OCI-LY7 (cell line): ENCODE measurements at regions of chr16 and their contacts with region 1.

Region 1: GRCh38 chr16:58629572-58630104 is at the start of gene CNOT1:
- DNase-seq: peak; percentile 99
- H3K4me3 ChIP-seq: peak within 1 kb of the TSS; percentile 97
- H3K27ac ChIP-seq: peak within 1 kb of the TSS; percentile 87
- H3K4me1 ChIP-seq: peaks cover 25% of the 10 kb centered on the region
- CTCF ChIP-seq: no peak
- total RNA-seq, gene CNOT1: 209 and 230 TPM in 2 replicates

Region 2: DNA sequence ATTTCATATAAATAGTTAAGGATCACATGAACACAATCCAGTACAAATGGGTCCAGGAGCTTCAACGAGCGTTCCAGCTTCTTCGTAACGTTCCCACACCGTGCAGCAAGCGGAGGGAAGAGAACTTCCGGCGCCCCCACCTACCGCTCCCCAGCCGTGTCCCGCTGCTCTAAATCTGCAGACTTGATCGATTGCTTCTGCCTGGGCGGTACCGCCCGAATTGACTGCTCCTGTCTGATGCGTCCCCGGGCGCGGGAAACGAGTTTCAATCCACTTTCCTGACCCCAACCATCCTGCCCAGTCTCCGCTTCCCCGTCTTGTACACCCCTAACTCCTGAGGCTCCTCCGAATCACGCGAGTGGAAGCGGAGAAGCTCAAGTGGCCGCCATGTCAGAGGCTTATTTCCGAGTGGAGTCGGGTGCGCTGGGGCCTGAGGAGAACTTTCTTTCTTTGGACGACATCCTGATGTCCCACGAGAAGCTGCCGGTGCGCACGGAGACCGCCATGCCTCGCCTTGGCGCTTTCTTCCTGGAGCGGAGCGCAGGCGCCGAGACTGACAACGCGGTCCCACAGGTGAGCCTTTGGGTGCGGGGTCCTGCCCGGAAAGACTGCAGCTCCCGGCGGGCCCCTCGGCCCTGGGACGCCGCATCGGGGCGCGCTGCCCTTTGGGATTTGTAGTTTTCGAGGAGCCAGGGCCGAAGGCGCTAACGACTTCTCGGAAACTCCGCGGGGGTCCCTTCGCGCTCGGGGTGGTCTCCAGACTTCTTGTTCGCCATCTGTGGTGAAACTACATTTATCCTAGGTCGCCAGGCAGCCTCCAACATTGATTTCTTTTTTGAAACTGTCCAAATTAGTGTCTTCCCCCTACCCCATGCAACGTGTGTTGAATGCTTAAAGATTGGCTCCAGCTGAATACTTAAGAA is 237.2 kb before region 1 on chr16 and contains the start of gene GINS3:
- CTCF ChIA-PET with region 1: no interaction called
- POLR2A ChIA-PET with region 1: no interaction called
- intact Hi-C with region 1: loop called (anchors 1 kb)
- DNase-seq: peak; percentile 95
- H3K4me3 ChIP-seq: peak within 1 kb of the TSS; percentile 86
- H3K27ac ChIP-seq: peak within 1 kb of the TSS; percentile 79
- H3K4me1 ChIP-seq: peaks cover 17% of the 10 kb centered on the region
- CTCF ChIP-seq: no peak
- total RNA-seq, gene GINS3: 35.7 and 49.1 TPM in 2 replicates

Region 3: DNA sequence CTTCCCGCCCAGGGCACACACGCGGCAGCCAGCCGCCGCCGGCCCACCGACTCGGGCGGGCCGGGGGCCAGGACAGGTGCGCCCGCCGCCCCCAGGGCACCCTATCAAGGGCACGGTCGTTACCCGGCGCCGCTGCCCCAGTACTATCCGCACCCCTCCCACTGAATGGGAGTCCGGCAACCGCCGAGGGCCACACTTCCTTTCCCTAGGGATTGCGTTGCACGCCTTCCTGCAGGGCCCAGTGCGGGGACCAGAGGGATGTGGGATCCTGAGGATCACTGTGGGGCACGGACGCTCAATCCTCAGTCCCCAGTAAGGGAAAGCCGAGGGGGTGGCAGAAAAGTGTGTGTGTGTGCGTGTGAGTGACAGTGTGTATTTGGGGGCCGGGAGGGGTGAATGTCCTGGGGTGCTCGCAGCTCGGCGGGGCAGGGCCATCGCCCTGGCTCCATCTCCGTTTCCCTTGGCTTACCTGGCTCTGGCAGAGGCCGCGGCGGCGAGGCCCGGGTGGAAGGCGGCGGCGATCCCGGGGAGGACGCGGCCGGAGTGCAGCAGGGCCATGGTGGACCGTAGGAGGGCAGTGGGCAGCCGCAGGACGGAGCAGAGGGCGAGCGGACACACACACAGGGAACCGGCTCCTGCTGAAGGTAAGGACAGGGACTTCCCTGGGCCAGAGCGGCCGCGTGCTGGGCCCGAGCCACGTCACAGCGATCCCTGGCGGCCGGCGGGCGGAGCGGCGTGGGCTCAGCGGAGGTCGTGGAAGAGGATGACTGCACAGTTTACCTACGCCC is 104.2 kb after region 1 on chr16 and contains the start of gene GOT2:
- CTCF ChIA-PET with region 1: no interaction called
- POLR2A ChIA-PET with region 1: interaction called, 3 read pairs
- intact Hi-C with region 1: loop called (anchors 2 kb)
- DNase-seq: peak; percentile 90
- H3K4me3 ChIP-seq: peak within 1 kb of the TSS; percentile 98
- H3K27ac ChIP-seq: peak within 1 kb of the TSS; percentile 68
- H3K4me1 ChIP-seq: peaks cover 49% of the 10 kb centered on the region
- CTCF ChIP-seq: peak; percentile 89
- total RNA-seq, gene GOT2: 90.8 and 104 TPM in 2 replicates